CD4-positive, alpha-beta T cell (primary cell): ENCODE measurements at regions of chr22 and their contacts with region 1.

Region 1: GRCh38 chr22:46035742-46036557 is 59.0 kb upstream of the WNT7B start:
- DNase-seq: peak; percentile 99 to 100 (median 100)
- ATAC-seq: peak; percentile 88
- H3K4me3 ChIP-seq: peak overlapping the region; percentile 83
- H3K4me3 Mint-ChIP-seq: peak overlapping the region; percentile 92
- H3K27ac ChIP-seq: peak overlapping the region; percentile 97 to 99
- H3K27ac Mint-ChIP-seq: peak overlapping the region; percentile 98
- H3K4me1 ChIP-seq: peaks cover 14% of the 10 kb centered on the region
- H3K4me1 Mint-ChIP-seq: peaks cover 26% of the 10 kb centered on the region
- H3K27me3 ChIP-seq: no peaks in the 10 kb centered on the region
- H3K27me3 Mint-ChIP-seq: no peaks in the 10 kb centered on the region
- CTCF ChIP-seq: no peak

Region 2: GRCh38 chr22:45163451-45164269 is 872.3 kb before region 1 on chr22 and contains the start of gene NUP50:
- CTCF ChIA-PET with region 1: no interaction called
- POLR2A ChIA-PET with region 1: no interaction called
- intact Hi-C with region 1: loop called in 1 of 2 experiments (anchors 10 kb)
- DNase-seq: peak; percentile 89 to 100 (median 96)
- ATAC-seq: peak; percentile 77
- H3K4me3 ChIP-seq: peak within 1 kb of the TSS; percentile 80
- H3K4me3 Mint-ChIP-seq: peak within 1 kb of the TSS; percentile 97
- H3K27ac ChIP-seq: peak within 1 kb of the TSS; percentile 84 to 85
- H3K27ac Mint-ChIP-seq: peak within 1 kb of the TSS; percentile 93
- H3K4me1 ChIP-seq: peaks cover 56% of the 10 kb centered on the region
- H3K4me1 Mint-ChIP-seq: peaks cover 71% of the 10 kb centered on the region
- H3K27me3 ChIP-seq: no peaks in the 10 kb centered on the region
- H3K27me3 Mint-ChIP-seq: no peaks in the 10 kb centered on the region
- CTCF ChIP-seq: no peak
- total RNA-seq, gene NUP50: 141 TPM

Region 3: DNA sequence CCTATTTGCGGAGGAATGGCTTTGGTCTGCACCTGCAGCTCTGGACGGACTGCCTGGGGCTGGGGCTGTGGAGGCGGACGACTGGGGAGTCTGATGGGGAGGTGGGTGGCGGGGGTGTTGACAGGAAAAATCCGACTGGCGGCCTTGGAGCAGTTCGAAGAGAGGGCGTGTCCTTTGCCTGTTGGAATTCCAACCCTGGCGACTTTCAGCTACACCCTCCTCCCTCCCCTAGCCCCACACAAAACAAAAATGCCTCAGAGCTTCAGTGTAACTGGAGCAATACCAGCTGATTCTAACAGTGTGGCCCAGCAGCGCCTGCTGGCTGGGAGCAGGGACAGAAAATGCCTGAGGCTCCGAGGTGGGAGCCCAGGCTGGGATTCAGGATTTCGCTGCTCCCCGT is 278.9 kb before region 1 on chr22:
- CTCF ChIA-PET with region 1: no interaction called
- POLR2A ChIA-PET with region 1: no interaction called
- intact Hi-C with region 1: no loop called
- DNase-seq: no peak
- ATAC-seq: no peak
- H3K4me3 ChIP-seq: no peak overlapping the region
- H3K4me3 Mint-ChIP-seq: no peak overlapping the region
- H3K27ac ChIP-seq: no peak overlapping the region
- H3K27ac Mint-ChIP-seq: no peak overlapping the region
- H3K4me1 ChIP-seq: no peaks in the 10 kb centered on the region
- H3K4me1 Mint-ChIP-seq: no peaks in the 10 kb centered on the region
- H3K27me3 ChIP-seq: no peaks in the 10 kb centered on the region
- H3K27me3 Mint-ChIP-seq: no peaks in the 10 kb centered on the region
- CTCF ChIP-seq: no peak

Region 4: GRCh38 chr22:46013460-46014416 is 22.2 kb before region 1 on chr22:
- CTCF ChIA-PET with region 1: interaction called, 28 read pairs
- POLR2A ChIA-PET with region 1: interaction called, 105 read pairs
- intact Hi-C with region 1: loop called (anchors 1 kb)
- DNase-seq: peak; percentile 66 to 94 (median 84)
- ATAC-seq: peak; percentile 83
- H3K4me3 ChIP-seq: peak overlapping the region; percentile 94
- H3K4me3 Mint-ChIP-seq: peak overlapping the region; percentile 89
- H3K27ac ChIP-seq: peak overlapping the region; percentile 58 to 87
- H3K27ac Mint-ChIP-seq: peak overlapping the region; percentile 86
- H3K4me1 ChIP-seq: peaks cover 20% of the 10 kb centered on the region
- H3K4me1 Mint-ChIP-seq: peaks cover 12% of the 10 kb centered on the region
- H3K27me3 ChIP-seq: peaks cover 0 to 2% of the 10 kb centered on the region in 2 experiments
- H3K27me3 Mint-ChIP-seq: no peaks in the 10 kb centered on the region
- CTCF ChIP-seq: peak; percentile 77

Region 5: GRCh38 chr22:46071451-46072109 is 35.6 kb after region 1 on chr22:
- CTCF ChIA-PET with region 1: interaction called, 6 read pairs
- POLR2A ChIA-PET with region 1: interaction called, 33 read pairs
- intact Hi-C with region 1: loop called (anchors 2 kb)
- DNase-seq: peak; percentile 45 to 80 (median 60)
- ATAC-seq: peak; percentile 28
- H3K4me3 ChIP-seq: peak overlapping the region; percentile 38
- H3K4me3 Mint-ChIP-seq: peak overlapping the region; percentile 90
- H3K27ac ChIP-seq: peak overlapping the region in 1 of 2 donors; percentile 46
- H3K27ac Mint-ChIP-seq: peak overlapping the region; percentile 78
- H3K4me1 ChIP-seq: peaks cover 56% of the 10 kb centered on the region
- H3K4me1 Mint-ChIP-seq: peaks cover 55% of the 10 kb centered on the region
- H3K27me3 ChIP-seq: peaks cover 0 to 10% of the 10 kb centered on the region in 2 experiments
- H3K27me3 Mint-ChIP-seq: no peaks in the 10 kb centered on the region
- CTCF ChIP-seq: no peak

Region 6: GRCh38 chr22:46116491-46116958 is 80.6 kb after region 1 on chr22:
- CTCF ChIA-PET with region 1: interaction called, 15 read pairs
- POLR2A ChIA-PET with region 1: interaction called, 6 read pairs
- intact Hi-C with region 1: no loop called
- DNase-seq: peak; percentile 76 to 92 (median 85)
- ATAC-seq: peak; percentile 97
- H3K4me3 ChIP-seq: no peak overlapping the region
- H3K4me3 Mint-ChIP-seq: no peak overlapping the region
- H3K27ac ChIP-seq: no peak overlapping the region
- H3K27ac Mint-ChIP-seq: no peak overlapping the region
- H3K4me1 ChIP-seq: peaks cover 11% of the 10 kb centered on the region
- H3K4me1 Mint-ChIP-seq: no peaks in the 10 kb centered on the region
- H3K27me3 ChIP-seq: no peaks in the 10 kb centered on the region
- H3K27me3 Mint-ChIP-seq: no peaks in the 10 kb centered on the region
- CTCF ChIP-seq: peak; percentile 80

Region 7: DNA sequence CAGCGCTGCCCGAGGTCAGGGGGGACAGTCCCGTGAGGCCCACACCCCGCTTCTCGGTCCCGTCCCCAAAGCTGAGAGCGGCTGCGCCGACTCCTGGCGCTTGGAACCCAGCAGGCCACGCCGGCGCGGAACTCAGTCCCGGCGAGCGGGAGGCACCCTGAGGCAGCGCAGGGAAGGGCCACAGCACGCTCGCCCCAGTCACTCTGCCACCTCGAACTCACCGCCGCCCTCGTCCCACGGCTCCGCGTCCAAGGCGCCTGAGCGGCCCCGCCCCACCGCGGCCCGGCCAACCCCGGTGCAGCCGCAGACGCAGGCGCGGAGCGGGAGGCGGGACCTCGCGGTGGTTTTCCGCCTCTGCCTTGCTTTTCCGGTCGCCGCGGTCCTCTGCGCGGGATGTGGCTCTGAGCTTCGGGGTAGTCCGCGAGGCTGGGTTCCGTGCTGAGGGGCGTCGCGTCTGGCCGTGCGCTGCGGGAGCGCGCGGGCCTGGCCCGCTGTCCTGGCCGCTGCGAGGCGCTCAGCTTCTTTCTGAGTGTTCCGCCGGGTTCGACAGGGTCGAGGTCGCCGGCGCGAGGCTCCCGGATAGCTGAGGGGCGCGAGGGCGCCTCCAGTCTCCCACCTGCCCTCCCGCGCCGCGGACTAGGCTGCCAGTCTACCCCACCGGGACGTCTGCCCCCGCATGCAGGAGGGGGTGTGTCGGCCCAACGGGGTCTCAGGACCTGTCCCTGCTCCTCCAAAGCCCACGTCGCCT is 214.3 kb after region 1 on chr22 and contains the start of gene CDPF1:
- CTCF ChIA-PET with region 1: no interaction called
- POLR2A ChIA-PET with region 1: interaction called, 3 read pairs
- intact Hi-C with region 1: loop called in 1 of 2 experiments (anchors 2 kb)
- DNase-seq: peak; percentile 82 to 96 (median 91)
- ATAC-seq: peak; percentile 95
- H3K4me3 ChIP-seq: peak within 1 kb of the TSS; percentile 79
- H3K4me3 Mint-ChIP-seq: peak within 1 kb of the TSS; percentile 86
- H3K27ac ChIP-seq: peak within 1 kb of the TSS in 1 of 2 donors; percentile 65
- H3K27ac Mint-ChIP-seq: peak within 1 kb of the TSS; percentile 76
- H3K4me1 ChIP-seq: peaks cover 31% of the 10 kb centered on the region
- H3K4me1 Mint-ChIP-seq: peaks cover 32% of the 10 kb centered on the region
- H3K27me3 ChIP-seq: no peaks in the 10 kb centered on the region
- H3K27me3 Mint-ChIP-seq: no peaks in the 10 kb centered on the region
- CTCF ChIP-seq: no peak
- total RNA-seq, gene CDPF1: 1.6 to 2.6 TPM

Region 8: GRCh38 chr22:46592390-46592872 is 556.5 kb after region 1 on chr22:
- CTCF ChIA-PET with region 1: no interaction called
- POLR2A ChIA-PET with region 1: no interaction called
- intact Hi-C with region 1: no loop called
- DNase-seq: peak in 6 of 14 experiments; percentile 22 to 67 (median 56)
- ATAC-seq: peak; percentile 62
- H3K4me3 ChIP-seq: peak overlapping the region; percentile 10
- H3K4me3 Mint-ChIP-seq: peak overlapping the region; percentile 69
- H3K27ac ChIP-seq: no peak overlapping the region
- H3K27ac Mint-ChIP-seq: no peak overlapping the region
- H3K4me1 ChIP-seq: peaks cover 29% of the 10 kb centered on the region
- H3K4me1 Mint-ChIP-seq: peaks cover 20% of the 10 kb centered on the region
- H3K27me3 ChIP-seq: no peaks in the 10 kb centered on the region
- H3K27me3 Mint-ChIP-seq: no peaks in the 10 kb centered on the region
- CTCF ChIP-seq: no peak